PC-3 (cell line): ENCODE measurements at regions of chr18 and their contacts with region 1.

Region 1: GRCh38 chr18:3454365-3455089 is 4.6 kb downstream of the TGIF1 start:
- DNase-seq: peak; percentile 76
- ATAC-seq: no peak
- H3K4me3 ChIP-seq: peak overlapping the region; percentile 96
- H3K27ac ChIP-seq: peak overlapping the region; percentile 95
- H3K4me1 ChIP-seq: peaks cover 46% of the 10 kb centered on the region
- H3K27me3 ChIP-seq: no peaks in the 10 kb centered on the region
- CTCF ChIP-seq: peak; percentile 83

Region 2: DNA sequence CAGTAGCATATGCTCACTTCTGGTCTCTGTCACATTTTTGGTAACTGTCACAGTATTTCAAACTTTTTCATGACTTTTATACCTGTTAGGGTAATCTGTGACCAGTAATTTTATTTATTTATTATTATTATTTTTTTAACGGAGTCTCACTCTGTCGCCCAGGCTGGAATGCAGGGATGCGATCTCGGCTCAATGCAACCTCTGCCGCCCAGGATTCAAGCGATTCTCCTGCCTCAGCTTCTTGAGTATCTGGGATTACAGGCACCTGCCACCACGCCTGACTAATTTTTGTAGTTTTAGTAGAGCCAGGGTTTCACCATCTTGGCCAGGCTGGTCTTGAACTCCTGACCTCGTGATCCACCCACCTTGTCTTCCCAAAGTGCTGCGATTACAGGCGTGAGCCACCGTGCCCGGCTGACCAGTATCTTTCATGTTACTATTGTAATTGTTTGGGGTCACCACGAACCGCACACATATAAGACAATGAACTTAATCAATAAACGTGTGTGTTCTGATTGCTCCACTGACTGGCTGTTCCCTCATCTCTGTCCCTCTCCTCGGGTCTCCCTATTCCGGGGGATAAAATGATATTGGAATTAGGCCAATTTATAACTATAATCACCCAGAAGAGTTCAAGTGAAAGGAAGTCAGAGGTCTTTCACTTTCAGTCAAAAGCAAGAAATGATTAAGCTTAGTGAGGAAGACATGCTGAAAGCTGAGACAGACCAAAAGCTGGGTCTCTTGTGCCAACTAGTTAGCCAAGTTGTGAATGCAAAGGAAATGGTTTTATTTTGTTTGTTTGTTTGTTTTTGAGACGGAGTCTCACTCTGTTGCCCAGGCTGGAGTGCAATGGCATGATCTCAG is 18.4 kb after region 1 on chr18:
- CTCF ChIA-PET with region 1: no interaction called
- POLR2A ChIA-PET with region 1: interaction called, 37 read pairs
- intact Hi-C with region 1: no loop called
- DNase-seq: no peak
- ATAC-seq: no peak
- H3K4me3 ChIP-seq: no peak overlapping the region
- H3K27ac ChIP-seq: no peak overlapping the region
- H3K4me1 ChIP-seq: no peaks in the 10 kb centered on the region
- H3K27me3 ChIP-seq: no peaks in the 10 kb centered on the region
- CTCF ChIP-seq: no peak

Region 3: GRCh38 chr18:3486512-3486911 is 32.0 kb after region 1 on chr18:
- CTCF ChIA-PET with region 1: no interaction called
- POLR2A ChIA-PET with region 1: no interaction called
- intact Hi-C with region 1: no loop called
- DNase-seq: no peak
- ATAC-seq: no peak
- H3K4me3 ChIP-seq: no peak overlapping the region
- H3K27ac ChIP-seq: no peak overlapping the region
- H3K4me1 ChIP-seq: no peaks in the 10 kb centered on the region
- H3K27me3 ChIP-seq: no peaks in the 10 kb centered on the region
- CTCF ChIP-seq: no peak

Region 4: DNA sequence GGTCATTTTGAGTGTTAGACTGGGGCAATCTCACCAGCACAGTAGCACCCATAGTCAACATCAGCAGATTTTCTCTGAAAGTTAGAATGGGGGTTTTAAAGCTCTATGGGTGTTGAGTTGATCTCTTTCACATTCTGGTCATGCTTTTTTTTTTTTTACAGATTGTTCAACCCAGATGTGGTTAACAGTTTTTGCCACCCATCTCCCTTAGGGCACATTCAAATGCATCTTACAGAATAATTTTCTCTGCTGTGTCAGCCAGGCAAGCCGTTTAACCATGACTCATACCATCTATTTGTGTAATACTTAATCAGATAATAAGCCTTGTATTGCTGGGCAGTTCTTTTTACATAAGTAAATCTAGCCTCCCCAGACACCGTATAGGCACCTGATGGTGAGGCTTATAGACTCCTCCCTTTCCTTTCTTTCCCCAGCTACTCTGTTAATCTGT is 57.4 kb after region 1 on chr18:
- CTCF ChIA-PET with region 1: no interaction called
- POLR2A ChIA-PET with region 1: no interaction called
- intact Hi-C with region 1: loop called (anchors 1 kb)
- DNase-seq: peak; percentile 82
- ATAC-seq: peak; percentile 70
- H3K4me3 ChIP-seq: no peak overlapping the region
- H3K27ac ChIP-seq: no peak overlapping the region
- H3K4me1 ChIP-seq: peaks cover 20% of the 10 kb centered on the region
- H3K27me3 ChIP-seq: no peaks in the 10 kb centered on the region
- CTCF ChIP-seq: no peak

Region 5: DNA sequence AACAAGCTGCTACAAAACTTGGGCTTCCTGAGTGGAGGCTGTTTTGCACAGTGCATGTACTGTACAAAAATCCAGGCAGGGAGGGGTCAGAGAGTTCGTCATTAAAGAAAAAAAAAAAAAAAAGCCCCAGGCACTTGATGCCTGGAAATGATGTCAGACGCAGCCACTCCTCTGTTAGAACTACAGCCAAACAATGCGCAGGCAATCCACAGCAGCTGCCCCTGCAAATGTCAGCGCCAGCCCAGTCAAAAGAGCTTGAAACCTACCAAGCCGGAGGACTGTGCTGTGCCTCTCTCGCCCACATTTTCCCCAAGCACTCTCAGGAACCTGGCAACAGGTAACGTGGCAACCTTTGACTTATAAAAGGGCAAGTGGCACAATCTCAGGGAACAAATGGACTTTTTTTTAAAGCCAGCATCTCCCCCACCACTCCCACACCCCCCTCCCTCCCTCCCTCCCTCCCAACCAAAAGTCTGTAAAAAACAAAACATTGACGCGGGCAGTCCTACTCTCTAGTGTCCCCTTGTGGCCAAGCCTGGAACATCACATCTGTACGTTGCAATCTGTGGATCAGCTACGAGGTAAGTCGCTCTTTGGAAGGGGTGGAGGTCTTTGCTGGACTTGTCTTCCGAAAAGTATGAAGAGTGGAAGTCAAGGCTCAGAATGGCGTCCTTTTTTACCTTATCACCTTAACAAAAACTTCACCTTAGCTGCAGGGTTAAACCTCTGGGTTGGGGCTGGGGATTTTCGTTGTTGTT is 139.6 kb after region 1 on chr18:
- CTCF ChIA-PET with region 1: interaction called, 9 read pairs
- POLR2A ChIA-PET with region 1: interaction called, 13 read pairs
- intact Hi-C with region 1: loop called (anchors 1 kb)
- DNase-seq: peak; percentile 94
- ATAC-seq: peak; percentile 50
- H3K4me3 ChIP-seq: peak overlapping the region; percentile 60
- H3K27ac ChIP-seq: peak overlapping the region; percentile 99
- H3K4me1 ChIP-seq: peaks cover 45% of the 10 kb centered on the region
- H3K27me3 ChIP-seq: no peaks in the 10 kb centered on the region
- CTCF ChIP-seq: peak; percentile 81